Activated naive CD4-positive, alpha-beta T cell treated with anti-CD3 and anti-CD28 coated beads for 36 hours (primary cell): ENCODE measurements at regions of chr5 and their contacts with region 1.

Region 1: GRCh38 chr5:170267431-170268152 is 30.0 kb downstream of the LCP2 start:
- DNase-seq: peak; percentile 90
- H3K4me3 Mint-ChIP-seq: peak overlapping the region; percentile 57
- H3K27ac Mint-ChIP-seq: peak overlapping the region; percentile 86
- H3K4me1 Mint-ChIP-seq: peaks cover 88% of the 10 kb centered on the region
- H3K27me3 Mint-ChIP-seq: no peaks in the 10 kb centered on the region

Region 2: DNA sequence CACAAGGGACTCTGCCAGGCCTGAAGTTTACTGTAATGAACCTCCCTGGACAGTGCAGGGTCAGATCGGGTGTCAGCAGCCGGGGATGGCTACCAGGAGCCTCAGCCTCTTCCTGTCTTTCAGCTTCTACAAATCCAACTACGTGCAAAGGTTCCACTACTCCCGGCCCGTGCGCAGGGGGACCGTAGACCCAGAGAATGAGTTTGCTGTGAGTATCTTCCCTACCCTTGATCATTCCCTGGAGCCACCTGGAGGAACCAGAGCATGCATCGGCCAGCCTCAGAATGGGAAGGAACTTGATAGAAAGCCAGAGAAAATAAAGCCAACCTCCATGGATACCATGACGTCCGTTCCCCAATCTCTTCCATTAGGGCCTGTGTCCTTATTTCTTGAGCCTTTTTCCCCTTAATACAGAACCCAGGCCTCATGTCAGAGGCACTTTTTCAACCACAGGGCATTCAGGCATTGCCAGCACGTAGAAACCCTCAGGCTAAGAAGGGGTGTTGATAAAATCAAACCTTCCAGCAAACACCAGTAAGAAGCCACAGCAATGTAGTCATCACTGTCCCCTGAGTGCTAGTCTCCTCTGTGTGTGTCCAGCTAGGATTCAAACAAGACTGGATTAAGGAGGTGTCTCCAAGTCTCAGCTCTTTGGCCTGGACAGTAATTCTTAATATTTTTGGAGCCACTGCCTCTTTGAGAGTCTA is 210.9 kb before region 1 on chr5:
- CTCF ChIA-PET with region 1: no interaction called
- intact Hi-C with region 1: no loop called
- DNase-seq: no peak
- H3K4me3 Mint-ChIP-seq: no peak overlapping the region
- H3K27ac Mint-ChIP-seq: no peak overlapping the region
- H3K4me1 Mint-ChIP-seq: no peaks in the 10 kb centered on the region
- H3K27me3 Mint-ChIP-seq: no peaks in the 10 kb centered on the region

Region 3: GRCh38 chr5:170100066-170100943 is 167.3 kb before region 1 on chr5:
- CTCF ChIA-PET with region 1: no interaction called
- intact Hi-C with region 1: loop called (anchors 5 kb)
- DNase-seq: peak; percentile 88
- H3K4me3 Mint-ChIP-seq: no peak overlapping the region
- H3K27ac Mint-ChIP-seq: no peak overlapping the region
- H3K4me1 Mint-ChIP-seq: no peaks in the 10 kb centered on the region
- H3K27me3 Mint-ChIP-seq: peaks cover 2% of the 10 kb centered on the region

Region 4: DNA sequence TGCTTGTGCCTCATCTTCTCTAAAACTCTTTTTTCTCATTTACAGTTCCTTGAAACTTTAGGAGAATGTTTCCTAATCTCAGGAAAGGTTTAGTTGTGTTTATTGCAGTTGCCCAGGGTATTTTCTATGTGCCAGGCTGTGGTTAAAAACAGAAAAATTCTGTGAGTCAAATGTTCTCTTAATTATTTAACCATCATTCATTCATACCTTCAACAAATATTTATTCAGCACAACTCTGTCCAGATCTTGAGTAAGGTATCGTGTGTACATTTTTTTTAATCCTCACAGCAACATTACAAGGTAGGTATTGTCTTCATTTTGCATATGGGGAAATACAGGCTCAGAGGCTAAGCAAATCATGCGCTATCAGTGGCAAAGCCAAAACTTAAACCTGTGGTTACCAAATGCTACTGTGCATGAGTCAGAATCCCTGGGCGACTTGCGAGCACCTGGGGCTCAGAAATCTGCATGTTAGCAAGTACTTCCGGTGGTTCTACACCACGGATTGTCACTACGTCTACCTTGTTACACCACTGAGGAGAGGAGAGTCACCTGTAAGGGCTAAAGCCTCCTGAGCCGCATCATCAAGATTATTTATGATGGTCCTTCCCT is 13.6 kb before region 1 on chr5:
- CTCF ChIA-PET with region 1: interaction called, 5 read pairs
- intact Hi-C with region 1: loop called (anchors 1 kb)
- DNase-seq: peak; percentile 86
- H3K4me3 Mint-ChIP-seq: no peak overlapping the region
- H3K27ac Mint-ChIP-seq: peak overlapping the region; percentile 83
- H3K4me1 Mint-ChIP-seq: peaks cover 62% of the 10 kb centered on the region
- H3K27me3 Mint-ChIP-seq: no peaks in the 10 kb centered on the region

Region 5: DNA sequence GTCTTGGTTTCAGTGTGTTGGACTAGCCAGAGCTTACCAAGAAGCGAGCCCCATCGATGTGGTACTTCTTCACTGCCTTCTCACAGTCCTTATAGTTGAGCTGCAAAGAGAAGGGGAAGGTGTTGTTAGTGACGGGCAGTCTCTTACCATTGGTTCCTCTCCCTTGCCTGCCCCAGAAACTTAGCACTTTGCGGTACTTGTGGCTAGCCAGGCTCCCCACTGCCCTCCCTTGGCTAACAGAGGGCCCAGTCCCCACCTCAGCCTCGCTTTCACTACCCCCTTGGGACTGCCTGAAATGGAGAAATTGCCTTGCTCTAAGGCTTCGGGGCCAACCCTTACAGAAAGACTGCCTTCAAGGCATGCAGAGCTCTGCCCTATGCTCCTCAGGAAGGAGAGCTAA is 25.7 kb after region 1 on chr5:
- CTCF ChIA-PET with region 1: interaction called, 281 read pairs
- intact Hi-C with region 1: loop called (anchors 1 kb)
- DNase-seq: peak; percentile 66
- H3K4me3 Mint-ChIP-seq: peak overlapping the region; percentile 95
- H3K27ac Mint-ChIP-seq: peak overlapping the region; percentile 98
- H3K4me1 Mint-ChIP-seq: peaks cover 69% of the 10 kb centered on the region
- H3K27me3 Mint-ChIP-seq: no peaks in the 10 kb centered on the region

Region 6: DNA sequence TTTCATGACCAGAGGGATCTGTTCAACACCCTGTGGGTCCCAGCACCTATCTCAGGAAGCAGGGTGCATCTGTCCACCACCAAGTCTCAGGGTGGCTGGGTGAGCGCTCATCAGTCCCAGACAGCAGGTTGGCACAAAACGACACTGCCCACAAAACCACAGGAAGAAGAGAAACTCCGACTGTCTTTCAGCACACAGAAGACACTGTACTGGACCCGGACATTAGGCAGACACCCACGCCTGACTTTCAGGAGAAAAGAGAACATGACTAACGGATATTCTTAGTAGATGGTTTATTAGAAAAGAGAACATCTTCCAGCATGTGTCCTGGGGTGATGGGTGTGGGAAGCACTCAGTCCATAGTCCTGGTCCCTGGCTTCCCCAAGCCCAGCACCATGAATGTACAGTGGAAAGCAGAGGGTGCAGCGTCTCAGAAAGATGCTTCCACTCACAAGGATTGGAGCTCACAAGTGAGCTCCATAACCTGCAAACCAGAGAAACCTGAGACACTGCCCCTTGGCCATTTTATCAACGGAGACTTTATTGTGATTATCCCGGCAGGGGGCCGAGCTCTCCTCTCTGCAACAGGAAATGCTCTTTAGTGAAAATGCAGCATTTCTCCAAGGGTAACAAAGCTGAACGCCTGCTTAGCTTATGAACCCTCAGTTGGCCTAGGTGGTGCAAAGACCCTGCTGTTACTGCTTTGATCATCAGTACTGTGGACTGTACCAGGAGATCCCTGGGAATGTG is 65.7 kb after region 1 on chr5:
- CTCF ChIA-PET with region 1: interaction called, 209 read pairs
- intact Hi-C with region 1: loop called (anchors 1 kb)
- DNase-seq: peak; percentile 80
- H3K4me3 Mint-ChIP-seq: peak overlapping the region; percentile 42
- H3K27ac Mint-ChIP-seq: no peak overlapping the region
- H3K4me1 Mint-ChIP-seq: peaks cover 65% of the 10 kb centered on the region
- H3K27me3 Mint-ChIP-seq: no peaks in the 10 kb centered on the region

Region 7: DNA sequence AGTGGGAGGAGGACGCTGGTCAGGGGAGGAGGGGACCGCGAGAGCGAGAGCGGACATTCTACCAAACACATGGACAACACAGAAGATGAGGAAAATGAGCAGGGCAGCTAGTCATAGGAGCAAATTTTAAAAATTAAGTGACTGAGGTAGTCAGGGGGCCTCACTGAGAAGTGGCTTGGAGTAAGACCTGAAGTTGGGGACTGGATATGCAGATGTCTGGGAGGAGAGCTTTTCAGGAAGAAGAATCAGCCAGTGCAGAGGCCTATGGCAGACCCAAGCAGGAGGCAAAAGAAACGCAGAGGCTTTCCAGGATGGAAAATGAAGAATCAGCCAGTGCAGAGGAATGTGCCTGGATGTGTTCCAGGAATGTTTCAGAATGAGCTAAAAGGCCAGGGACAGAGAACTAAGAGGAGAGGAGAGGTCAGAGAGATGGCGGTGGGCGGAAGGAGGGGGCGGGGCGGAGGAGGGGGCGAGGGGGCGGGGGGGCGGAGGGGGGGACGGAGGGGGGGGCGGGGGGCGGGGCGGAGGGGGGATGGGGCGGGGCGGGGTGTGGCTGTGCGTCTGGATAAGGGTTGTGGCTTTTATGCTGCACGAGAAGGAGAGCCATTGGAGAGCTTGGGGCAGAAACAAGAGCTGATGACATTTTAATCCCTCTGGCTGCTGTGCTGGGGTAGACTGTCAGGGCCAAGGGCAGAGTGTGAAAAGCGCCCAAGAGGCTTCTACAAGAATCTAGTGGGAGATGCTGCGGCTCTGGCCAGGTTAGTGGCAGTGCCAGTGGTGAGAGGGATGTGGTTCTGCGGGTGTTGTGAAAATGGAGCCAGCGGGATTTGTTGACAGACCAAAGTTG is 365.9 kb after region 1 on chr5:
- CTCF ChIA-PET with region 1: no interaction called
- intact Hi-C with region 1: loop called (anchors 5 kb)
- DNase-seq: peak; percentile 11
- H3K4me3 Mint-ChIP-seq: peak overlapping the region; percentile 57
- H3K27ac Mint-ChIP-seq: no peak overlapping the region
- H3K4me1 Mint-ChIP-seq: peaks cover 16% of the 10 kb centered on the region
- H3K27me3 Mint-ChIP-seq: no peaks in the 10 kb centered on the region